HCT116 (cell line): ENCODE measurements at regions of chr1 and their contacts with region 1.

Region 1: DNA sequence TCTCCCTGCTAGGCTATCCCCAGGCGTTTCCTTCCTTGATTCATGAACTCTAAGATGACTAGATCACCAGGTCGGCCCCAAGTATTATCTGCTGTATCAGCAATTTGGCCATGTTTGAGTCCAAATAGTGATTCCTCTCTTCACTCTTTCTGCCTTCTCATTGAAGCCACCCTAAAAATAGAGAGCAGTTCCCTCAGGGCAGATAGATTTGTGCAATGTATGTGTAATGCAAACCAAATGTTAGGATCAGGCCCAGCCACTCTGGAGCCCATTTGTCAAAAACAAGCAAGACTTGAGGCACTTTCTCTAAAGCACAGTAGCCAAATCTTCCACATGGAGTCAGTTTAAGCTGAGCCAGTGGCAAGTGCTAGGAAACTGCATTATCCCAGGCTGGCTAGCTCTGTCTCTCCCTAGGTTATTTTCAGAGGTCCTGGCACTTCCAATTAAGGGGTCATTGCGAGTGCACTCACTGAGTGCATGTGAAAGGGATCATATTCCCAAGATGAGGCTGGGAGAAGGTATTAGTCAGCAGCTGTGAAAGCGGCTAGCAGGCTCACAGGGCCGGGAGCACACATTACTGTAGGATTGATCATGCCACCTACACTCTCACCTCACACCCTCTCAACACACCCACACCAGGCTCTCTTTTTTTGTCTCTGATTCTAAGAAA is 97.9 kb upstream of the RAB3GAP2 start:
- DNase-seq: peak; percentile 63
- ATAC-seq: peak; percentile 90
- H3K4me3 ChIP-seq: peak overlapping the region in 1 of 2 experiments; percentile 7; a peak in 1 of 4 replicates
- H3K27ac ChIP-seq: peak overlapping the region; percentile 7; the same call in 1 of the 2 replicates
- H3K4me1 ChIP-seq: peaks cover 13 to 37% of the 10 kb centered on the region in 2 experiments
- H3K27me3 ChIP-seq: no peaks in the 10 kb centered on the region
- CTCF ChIP-seq: no peak
- POLR2A ChIP-seq: no peak
- RAD21 ChIP-seq: no peak

Region 2: GRCh38 chr1:220527908-220528678 is 157.9 kb after region 1 on chr1 and contains the start of gene MARK1:
- CTCF ChIA-PET with region 1: no interaction called
- POLR2A ChIA-PET with region 1: no interaction called
- RAD21 ChIA-PET with region 1: no interaction called
- intact Hi-C with region 1: loop called (anchors 10 kb)
- DNase-seq: no peak
- ATAC-seq: peak; percentile 84
- H3K4me3 ChIP-seq: peak within 1 kb of the TSS; percentile 58 to 71
- H3K27ac ChIP-seq: peak within 1 kb of the TSS; percentile 57
- H3K4me1 ChIP-seq: peaks cover 0 to 22% of the 10 kb centered on the region in 2 experiments; a peak in 1 of 4 replicates
- H3K27me3 ChIP-seq: no peaks in the 10 kb centered on the region
- CTCF ChIP-seq: no peak
- POLR2A ChIP-seq: no peak
- RAD21 ChIP-seq: no peak
- total RNA-seq, gene MARK1: 3.6 TPM